B cell (primary cell): ENCODE measurements at regions of chr5 and their contacts with region 1.

Region 1: DNA sequence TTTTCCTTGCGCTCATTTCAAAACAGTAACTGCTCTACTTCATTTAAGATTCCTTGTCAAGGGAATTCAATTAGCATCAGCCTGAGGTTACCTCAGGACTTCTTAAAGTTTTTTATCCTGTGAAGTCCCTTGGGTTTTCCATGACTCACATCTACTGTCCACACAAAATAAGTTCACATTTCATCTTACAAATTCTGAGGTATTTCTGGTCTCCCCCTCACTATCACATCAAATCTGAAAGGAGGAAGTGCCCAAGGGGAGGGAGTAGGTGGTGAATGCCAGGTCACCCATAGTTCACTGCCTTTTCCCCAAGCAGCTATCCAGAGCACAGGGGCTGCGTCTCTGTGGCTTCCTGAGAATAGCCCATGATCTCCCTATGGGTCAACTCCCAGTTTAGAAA is 227.1 kb upstream of the NREP start:
- DNase-seq: no peak
- ATAC-seq: no peak
- H3K4me3 ChIP-seq: no peak overlapping the region
- H3K4me3 Mint-ChIP-seq: no peak overlapping the region
- H3K27ac ChIP-seq: no peak overlapping the region
- H3K27ac Mint-ChIP-seq: no peak overlapping the region
- H3K4me1 ChIP-seq: no peaks in the 10 kb centered on the region
- H3K4me1 Mint-ChIP-seq: peaks cover 2% of the 10 kb centered on the region
- H3K27me3 ChIP-seq: no peaks in the 10 kb centered on the region
- H3K27me3 Mint-ChIP-seq: no peaks in the 10 kb centered on the region
- CTCF ChIP-seq: no peak

Region 2: GRCh38 chr5:111932628-111933027 is 51.4 kb before region 1 on chr5:
- CTCF ChIA-PET with region 1: no interaction called
- POLR2A ChIA-PET with region 1: no interaction called
- intact Hi-C with region 1: no loop called
- DNase-seq: no peak
- ATAC-seq: no peak
- H3K4me3 ChIP-seq: no peak overlapping the region
- H3K4me3 Mint-ChIP-seq: no peak overlapping the region
- H3K27ac ChIP-seq: no peak overlapping the region
- H3K27ac Mint-ChIP-seq: no peak overlapping the region
- H3K4me1 ChIP-seq: no peaks in the 10 kb centered on the region
- H3K4me1 Mint-ChIP-seq: no peaks in the 10 kb centered on the region
- H3K27me3 ChIP-seq: no peaks in the 10 kb centered on the region
- H3K27me3 Mint-ChIP-seq: peaks cover 5% of the 10 kb centered on the region
- CTCF ChIP-seq: no peak

Region 3: DNA sequence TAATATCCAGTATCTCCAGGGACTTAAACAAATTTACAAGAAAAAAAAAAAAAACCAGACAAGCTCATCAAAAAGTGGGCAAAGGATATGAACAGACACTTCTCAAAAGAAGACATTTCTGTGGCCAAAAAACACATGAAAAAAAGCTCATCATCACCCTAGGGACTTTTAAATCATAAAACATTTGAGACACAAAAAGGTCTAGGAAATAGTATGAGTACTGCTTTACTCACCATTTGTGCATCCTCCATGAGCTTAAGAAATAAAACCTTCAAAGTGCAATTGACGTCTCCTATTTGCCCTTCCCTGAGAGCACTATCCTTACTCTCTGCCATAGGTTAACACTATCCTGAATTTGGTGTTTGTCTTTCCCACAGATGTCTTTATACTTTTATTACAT is 33.4 kb before region 1 on chr5:
- CTCF ChIA-PET with region 1: no interaction called
- POLR2A ChIA-PET with region 1: no interaction called
- intact Hi-C with region 1: loop called (anchors 1 kb)
- DNase-seq: no peak
- ATAC-seq: no peak
- H3K4me3 ChIP-seq: no peak overlapping the region
- H3K4me3 Mint-ChIP-seq: no peak overlapping the region
- H3K27ac ChIP-seq: no peak overlapping the region
- H3K27ac Mint-ChIP-seq: no peak overlapping the region
- H3K4me1 ChIP-seq: peaks cover 18 to 21% of the 10 kb centered on the region in 2 donors
- H3K4me1 Mint-ChIP-seq: peaks cover 18% of the 10 kb centered on the region
- H3K27me3 ChIP-seq: no peaks in the 10 kb centered on the region
- H3K27me3 Mint-ChIP-seq: peaks cover 6% of the 10 kb centered on the region
- CTCF ChIP-seq: no peak

Region 4: DNA sequence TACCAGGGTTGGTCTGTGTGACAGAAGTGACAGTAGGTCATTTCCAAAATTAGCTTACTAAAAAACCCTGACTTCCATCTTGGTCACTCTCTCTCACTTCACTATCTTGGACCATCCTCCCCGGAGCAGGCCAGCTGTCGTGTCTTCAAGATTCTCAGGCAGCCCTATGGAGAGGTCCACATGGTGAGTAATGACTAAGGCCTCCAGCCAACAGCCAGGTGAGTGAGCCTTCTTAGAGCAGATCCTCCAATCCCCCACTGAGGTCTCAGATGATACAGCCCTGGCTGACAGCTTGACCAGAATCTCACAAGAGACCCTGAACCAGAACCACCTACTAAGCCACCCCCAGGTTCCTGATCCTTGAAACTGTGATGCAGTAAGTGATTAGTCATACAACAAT is 1084.5 kb after region 1 on chr5:
- CTCF ChIA-PET with region 1: no interaction called
- POLR2A ChIA-PET with region 1: no interaction called
- intact Hi-C with region 1: no loop called
- DNase-seq: no peak
- ATAC-seq: no peak
- H3K4me3 ChIP-seq: no peak overlapping the region
- H3K4me3 Mint-ChIP-seq: no peak overlapping the region
- H3K27ac ChIP-seq: no peak overlapping the region
- H3K27ac Mint-ChIP-seq: no peak overlapping the region
- H3K4me1 ChIP-seq: no peaks in the 10 kb centered on the region
- H3K4me1 Mint-ChIP-seq: no peaks in the 10 kb centered on the region
- H3K27me3 ChIP-seq: no peaks in the 10 kb centered on the region
- H3K27me3 Mint-ChIP-seq: no peaks in the 10 kb centered on the region
- CTCF ChIP-seq: no peak